ENCODE measurements at regions of chr14 and their contacts with region 1.

Region 1: DNA sequence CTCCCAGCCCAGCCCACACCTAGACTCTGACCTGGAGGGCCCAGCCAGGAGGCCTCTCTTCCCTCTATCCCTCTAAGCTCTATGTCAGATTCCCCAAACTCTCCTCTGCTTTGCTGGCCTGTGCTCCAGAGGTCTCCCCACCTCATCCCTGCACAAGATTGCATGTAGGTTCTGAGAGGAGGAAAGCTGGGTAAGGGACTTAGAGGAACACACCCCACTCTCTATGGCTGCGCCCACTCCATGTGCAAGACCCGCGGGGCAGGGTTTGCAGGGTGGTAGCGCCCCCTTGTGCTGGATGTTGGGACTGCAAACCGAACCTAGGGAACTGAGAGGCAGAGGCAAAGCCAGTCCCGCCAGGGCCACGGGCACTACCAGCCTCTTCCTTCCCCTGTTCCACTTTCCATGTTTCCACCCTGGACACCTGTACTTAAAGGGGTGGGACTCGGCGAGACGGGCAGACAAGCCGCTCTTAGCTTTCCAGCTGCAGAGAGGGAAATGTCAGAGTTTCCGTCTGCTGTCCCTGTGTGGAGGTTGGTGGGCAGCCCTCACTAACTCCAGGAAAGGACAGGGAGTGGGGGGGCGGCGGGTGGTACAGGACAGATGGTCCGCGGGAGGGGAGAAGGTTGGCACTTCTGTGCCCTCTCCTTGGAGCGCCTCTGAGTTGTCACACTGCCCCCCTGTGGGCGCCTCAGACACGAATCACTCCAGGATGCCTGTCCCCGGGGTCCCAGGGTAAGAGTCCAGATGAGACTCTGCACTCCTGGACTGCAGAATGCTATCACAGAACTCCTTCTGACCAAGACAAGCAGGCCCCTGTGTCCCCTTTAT is 16.8 kb downstream of the MMP14 start:
- DNase-seq: peak; percentile 25
- H3K4me3 ChIP-seq: peak overlapping the region; percentile 47
- H3K27me3 ChIP-seq: no peaks in the 10 kb centered on the region
- CTCF ChIP-seq: peak; percentile 89

Region 2: DNA sequence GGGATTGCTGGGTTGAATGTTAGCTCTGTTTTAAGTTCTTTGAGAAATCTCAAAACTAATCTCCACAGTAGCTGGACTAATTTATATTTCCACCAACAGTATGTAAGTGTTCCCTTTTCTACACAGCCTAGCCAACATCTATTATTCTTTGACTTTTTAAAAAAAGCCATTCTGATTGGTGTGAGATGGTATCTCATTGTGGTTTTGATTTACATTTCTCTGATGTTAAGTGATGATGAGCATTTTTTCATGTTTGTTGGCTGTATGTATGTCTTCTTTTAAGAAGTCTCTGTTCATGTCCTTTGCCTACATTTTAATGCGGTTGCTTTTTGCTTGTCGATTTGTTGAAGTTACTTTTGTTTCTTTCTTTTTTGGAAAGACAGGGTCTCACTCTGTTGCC is 878.4 kb before region 1 on chr14:
- CTCF ChIA-PET with region 1: no interaction called
- POLR2A ChIA-PET with region 1: no interaction called
- DNase-seq: no peak
- H3K4me3 ChIP-seq: no peak overlapping the region
- H3K27me3 ChIP-seq: no peaks in the 10 kb centered on the region
- CTCF ChIP-seq: no peak

Region 3: DNA sequence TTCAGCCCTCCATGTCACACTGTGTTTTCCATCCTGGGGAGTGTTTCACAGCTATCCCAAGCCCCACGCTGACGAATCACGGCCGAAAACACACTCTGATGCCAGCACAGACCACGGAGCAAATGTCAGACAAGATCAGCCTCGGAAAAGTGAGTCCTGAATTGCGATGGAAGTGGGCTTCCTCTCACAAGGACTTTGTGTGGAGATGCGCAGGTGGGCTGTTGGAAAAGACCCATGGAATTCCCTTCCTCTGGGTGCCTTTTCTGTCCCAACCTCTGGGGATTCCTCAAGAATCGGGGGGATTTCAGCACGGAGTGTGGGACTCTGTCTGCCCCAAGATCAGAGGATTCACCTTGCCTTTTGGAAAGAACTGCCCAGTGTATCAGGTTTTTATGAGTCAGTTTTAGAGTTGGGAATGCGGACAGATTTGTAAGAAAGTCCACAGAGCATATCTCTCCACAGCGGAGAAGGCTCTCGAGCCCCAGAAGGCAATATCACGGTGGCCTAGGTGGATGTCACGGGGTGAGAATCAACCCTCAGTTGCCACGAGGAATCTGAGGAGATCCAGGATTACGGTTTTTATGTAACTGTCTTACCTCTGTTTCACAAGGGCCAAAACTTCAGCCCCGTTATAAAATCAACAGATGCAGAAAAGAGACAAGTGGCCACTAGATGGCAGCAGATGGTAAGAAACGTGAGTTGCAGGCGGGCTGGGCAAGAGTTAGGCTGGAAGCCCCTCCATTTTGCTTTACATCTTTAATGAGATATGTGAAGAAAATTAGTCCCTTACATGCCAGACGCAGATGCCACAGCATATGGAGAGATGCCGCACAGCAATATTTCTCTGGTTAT is 466.0 kb before region 1 on chr14:
- CTCF ChIA-PET with region 1: interaction called, 11 read pairs
- POLR2A ChIA-PET with region 1: no interaction called
- DNase-seq: no peak
- H3K4me3 ChIP-seq: no peak overlapping the region
- H3K27me3 ChIP-seq: peaks cover 9% of the 10 kb centered on the region
- CTCF ChIP-seq: peak; percentile 74

Region 4: GRCh38 chr14:22570132-22570949 is 282.8 kb before region 1 on chr14:
- CTCF ChIA-PET with region 1: interaction called, 26 read pairs
- POLR2A ChIA-PET with region 1: no interaction called
- DNase-seq: no peak
- H3K4me3 ChIP-seq: no peak overlapping the region
- H3K27me3 ChIP-seq: no peaks in the 10 kb centered on the region
- CTCF ChIP-seq: peak; percentile 66

Region 5: DNA sequence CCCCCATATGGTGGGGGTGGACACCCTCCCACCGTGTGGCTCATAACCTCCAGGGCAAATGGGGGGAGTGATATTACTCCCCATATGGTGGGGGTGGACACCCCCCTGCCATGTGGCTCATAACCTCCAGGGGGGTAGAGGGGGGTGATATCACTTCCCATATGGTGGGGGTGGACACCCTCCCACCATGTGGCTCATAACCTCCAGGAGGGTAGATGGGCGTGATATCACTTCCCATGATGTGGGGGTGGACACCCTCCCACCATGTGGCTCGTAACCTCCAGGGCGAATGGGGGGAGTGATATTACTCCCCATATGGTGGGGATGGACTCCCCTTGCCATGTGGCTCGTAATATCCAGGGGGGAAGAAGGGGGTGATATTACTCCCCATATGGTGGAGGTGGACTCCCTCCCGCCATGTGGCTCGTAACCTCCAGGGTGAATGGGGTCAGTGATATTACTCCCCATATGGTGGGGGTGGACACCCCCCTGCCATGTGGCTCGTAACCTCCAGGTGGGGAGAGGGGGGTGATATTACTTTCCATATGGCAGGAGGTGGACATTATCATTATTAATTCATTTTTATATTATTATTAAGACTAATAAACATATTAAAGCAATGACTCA is 137.9 kb before region 1 on chr14:
- CTCF ChIA-PET with region 1: no interaction called
- POLR2A ChIA-PET with region 1: no interaction called
- DNase-seq: no peak
- H3K4me3 ChIP-seq: no peak overlapping the region
- H3K27me3 ChIP-seq: no peaks in the 10 kb centered on the region; the same call in 1 of the 2 replicates
- CTCF ChIP-seq: no peak

Region 6: DNA sequence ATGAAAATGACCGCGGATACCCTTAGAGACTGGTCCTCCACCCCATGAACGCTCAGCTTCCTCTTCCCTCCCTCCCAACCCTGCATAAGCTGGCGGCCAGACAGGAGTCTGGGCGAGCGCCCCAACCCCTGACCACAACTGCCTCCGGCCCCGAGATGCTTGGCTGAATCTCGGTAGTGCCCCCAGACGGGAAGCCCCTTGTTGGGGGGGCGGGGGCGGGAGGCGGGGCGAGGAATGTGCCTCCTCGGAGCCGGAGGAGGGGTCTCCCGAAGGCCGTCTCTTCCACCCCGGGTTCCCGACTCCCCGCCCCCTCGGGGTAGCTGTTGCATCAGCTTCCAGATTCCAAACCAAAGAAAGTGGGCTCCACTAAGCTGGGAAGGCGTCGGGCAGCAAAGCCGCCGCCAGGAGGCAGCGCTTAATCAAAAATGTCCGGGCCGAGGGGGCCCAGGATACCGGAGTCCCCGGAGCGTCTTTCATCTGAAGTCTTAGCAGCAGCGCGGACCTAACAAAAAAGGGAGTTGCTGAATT is 30.5 kb before region 1 on chr14:
- CTCF ChIA-PET with region 1: interaction called, 234 read pairs
- POLR2A ChIA-PET with region 1: interaction called, 12 read pairs
- DNase-seq: peak; percentile 54
- H3K4me3 ChIP-seq: peak overlapping the region; percentile 28
- H3K27me3 ChIP-seq: no peaks in the 10 kb centered on the region
- CTCF ChIP-seq: peak; percentile 90

Region 7: DNA sequence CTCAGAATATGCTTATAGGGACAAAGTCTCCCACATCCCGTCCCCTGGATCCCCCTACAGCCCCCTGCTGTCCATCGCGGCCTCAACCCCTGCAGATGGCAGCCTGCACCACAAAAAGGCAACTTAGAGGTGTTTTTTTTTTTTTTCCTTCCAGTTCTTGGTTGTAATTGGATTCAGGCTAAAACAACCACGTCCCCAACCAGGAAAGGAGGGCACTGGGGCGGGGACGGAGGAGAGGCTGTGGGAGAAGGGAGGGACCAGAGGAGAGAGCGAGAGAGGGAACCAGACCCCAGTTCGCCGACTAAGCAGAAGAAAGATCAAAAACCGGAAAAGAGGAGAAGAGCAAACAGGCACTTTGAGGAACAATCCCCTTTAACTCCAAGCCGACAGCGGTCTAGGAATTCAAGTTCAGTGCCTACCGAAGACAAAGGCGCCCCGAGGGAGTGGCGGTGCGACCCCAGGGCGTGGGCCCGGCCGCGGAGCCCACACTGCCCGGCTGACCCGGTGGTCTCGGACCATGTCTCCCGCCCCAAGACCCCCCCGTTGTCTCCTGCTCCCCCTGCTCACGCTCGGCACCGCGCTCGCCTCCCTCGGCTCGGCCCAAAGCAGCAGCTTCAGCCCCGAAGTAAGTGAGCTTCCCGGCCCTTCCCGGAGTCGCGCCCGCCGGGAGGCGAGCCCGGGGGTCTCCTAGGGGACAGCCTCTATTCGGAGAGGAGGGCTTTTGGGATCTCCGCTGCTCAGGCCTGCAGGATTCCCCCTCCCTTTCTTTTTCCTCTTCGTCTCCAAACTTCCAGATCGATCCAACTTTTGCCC is 16.6 kb before region 1 on chr14 and contains the start of gene MMP14:
- CTCF ChIA-PET with region 1: interaction called, 246 read pairs
- POLR2A ChIA-PET with region 1: interaction called, 21 read pairs
- DNase-seq: peak; percentile 81
- H3K4me3 ChIP-seq: peak within 1 kb of the TSS; percentile 83
- H3K27me3 ChIP-seq: no peaks in the 10 kb centered on the region
- CTCF ChIP-seq: peak; percentile 69
- polyA plus RNA-seq, gene MMP14: 327 and 592 TPM in 2 replicates

Region 8: GRCh38 chr14:22872033-22872832 is 19.1 kb after region 1 on chr14:
- CTCF ChIA-PET with region 1: interaction called, 44 read pairs
- POLR2A ChIA-PET with region 1: no interaction called
- DNase-seq: no peak
- H3K4me3 ChIP-seq: peak overlapping the region; percentile 97
- H3K27me3 ChIP-seq: no peaks in the 10 kb centered on the region
- CTCF ChIP-seq: peak; percentile 97

Region 9: DNA sequence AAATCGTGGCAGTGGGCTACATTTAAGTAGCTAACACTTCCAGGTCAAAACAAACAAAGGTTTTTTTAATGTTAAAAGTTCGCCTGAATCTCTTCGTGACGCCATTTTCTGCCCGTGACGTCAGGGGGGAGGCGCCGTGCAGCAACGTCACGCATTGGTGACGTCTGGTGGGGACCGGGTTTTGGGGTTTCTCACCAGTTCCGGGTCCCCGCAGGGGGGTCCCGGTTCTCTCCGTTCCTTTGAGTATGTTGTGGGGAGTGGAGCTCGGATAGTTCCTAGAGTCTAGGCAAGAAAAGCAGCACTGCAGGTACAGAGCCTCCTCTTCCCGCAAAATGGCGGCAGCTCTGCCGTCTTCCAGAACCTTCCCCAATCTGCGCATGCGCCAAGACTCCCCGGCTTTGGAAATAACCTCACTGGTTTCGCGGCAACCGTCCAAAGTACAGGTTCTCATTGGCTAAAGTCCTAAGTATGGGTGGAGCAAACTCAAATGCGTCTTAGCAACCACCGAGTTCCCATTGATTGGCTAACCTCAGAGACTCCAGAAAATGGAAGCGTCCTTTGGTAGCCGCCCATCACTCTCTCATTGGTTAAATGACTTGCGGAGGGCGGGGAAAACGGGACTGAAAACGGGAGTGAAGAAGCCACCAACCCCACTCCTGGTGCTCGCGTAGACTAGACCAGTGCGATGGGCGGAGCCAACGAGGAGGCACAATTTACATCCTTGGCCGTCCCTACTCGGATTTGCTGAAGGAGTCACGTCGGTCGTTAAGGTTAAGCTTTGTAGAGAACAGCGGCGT is 65.8 kb after region 1 on chr14 and contains the start of gene RBM23:
- CTCF ChIA-PET with region 1: no interaction called
- POLR2A ChIA-PET with region 1: no interaction called
- DNase-seq: peak; percentile 100
- H3K4me3 ChIP-seq: peak within 1 kb of the TSS; percentile 74
- H3K27me3 ChIP-seq: no peaks in the 10 kb centered on the region
- CTCF ChIP-seq: no peak
- polyA plus RNA-seq, gene RBM23: 54.1 and 60.9 TPM in 2 replicates

Measured in BJ (cell line).